ENCODE measurements at regions of chr4 and their contacts with region 1.

Region 1: GRCh38 chr4:145936142-145936996 is 2.3 kb downstream of the ZNF827 start:
- DNase-seq: no peak
- ATAC-seq: peak; percentile 70
- H3K4me3 ChIP-seq: peak overlapping the region; percentile 93
- H3K27ac ChIP-seq: peak overlapping the region; percentile 88
- H3K4me1 ChIP-seq: no peaks in the 10 kb centered on the region
- H3K27me3 ChIP-seq: no peaks in the 10 kb centered on the region
- CTCF ChIP-seq: peak; percentile 2 to 34 (median 19); a peak in 1 of 6 replicates
- EP300 ChIP-seq: no peak
- POLR2A ChIP-seq: peak; percentile 68; the same call in 1 of the 2 replicates
- RAD21 ChIP-seq: 0 out of 2 replicates have a peak, but pooled peaks have one; percentile 17

Region 2: GRCh38 chr4:145180298-145181090 is 755.9 kb before region 1 on chr4 and contains the start of gene OTUD4:
- CTCF ChIA-PET with region 1: no interaction called
- POLR2A ChIA-PET with region 1: no interaction called
- RAD21 ChIA-PET with region 1: no interaction called
- SMC1A ChIA-PET with region 1: no interaction called
- in situ Hi-C with region 1: no loop called
- intact Hi-C with region 1: loop called (anchors 5 kb)
- DNase-seq: peak; percentile 79
- ATAC-seq: peak; percentile 81
- H3K4me3 ChIP-seq: peak within 1 kb of the TSS; percentile 91
- H3K27ac ChIP-seq: peak within 1 kb of the TSS; percentile 95
- H3K4me1 ChIP-seq: peaks cover 25% of the 10 kb centered on the region
- H3K27me3 ChIP-seq: no peaks in the 10 kb centered on the region
- CTCF ChIP-seq: peak; percentile 20 to 44 (median 23); a peak in 4 of 6 replicates
- EP300 ChIP-seq: peak; percentile 33 to 50; a peak in 1 of 4 replicates
- POLR2A ChIP-seq: peak; percentile 80
- RAD21 ChIP-seq: peak; percentile 51; the same call in 1 of the 2 replicates
- polyA plus RNA-seq, gene OTUD4: 2.8 to 4.4 TPM

Region 3: GRCh38 chr4:145808021-145808650 is 128.2 kb before region 1 on chr4:
- CTCF ChIA-PET with region 1: interaction called, 8 read pairs
- POLR2A ChIA-PET with region 1: interaction called, 4 read pairs
- RAD21 ChIA-PET with region 1: no interaction called
- SMC1A ChIA-PET with region 1: interaction called, 4 read pairs
- in situ Hi-C with region 1: no loop called
- intact Hi-C with region 1: loop called (anchors 1 kb)
- DNase-seq: peak; percentile 86
- ATAC-seq: peak; percentile 87
- H3K4me3 ChIP-seq: peak overlapping the region; percentile 18; the same call in 1 of the 2 replicates
- H3K27ac ChIP-seq: peak overlapping the region; percentile 90
- H3K4me1 ChIP-seq: peaks cover 36% of the 10 kb centered on the region
- H3K27me3 ChIP-seq: no peaks in the 10 kb centered on the region
- CTCF ChIP-seq: no peak
- EP300 ChIP-seq: peak; percentile 87 to 91
- POLR2A ChIP-seq: no peak
- RAD21 ChIP-seq: peak; percentile 34; the same call in 1 of the 2 replicates

Region 4: DNA sequence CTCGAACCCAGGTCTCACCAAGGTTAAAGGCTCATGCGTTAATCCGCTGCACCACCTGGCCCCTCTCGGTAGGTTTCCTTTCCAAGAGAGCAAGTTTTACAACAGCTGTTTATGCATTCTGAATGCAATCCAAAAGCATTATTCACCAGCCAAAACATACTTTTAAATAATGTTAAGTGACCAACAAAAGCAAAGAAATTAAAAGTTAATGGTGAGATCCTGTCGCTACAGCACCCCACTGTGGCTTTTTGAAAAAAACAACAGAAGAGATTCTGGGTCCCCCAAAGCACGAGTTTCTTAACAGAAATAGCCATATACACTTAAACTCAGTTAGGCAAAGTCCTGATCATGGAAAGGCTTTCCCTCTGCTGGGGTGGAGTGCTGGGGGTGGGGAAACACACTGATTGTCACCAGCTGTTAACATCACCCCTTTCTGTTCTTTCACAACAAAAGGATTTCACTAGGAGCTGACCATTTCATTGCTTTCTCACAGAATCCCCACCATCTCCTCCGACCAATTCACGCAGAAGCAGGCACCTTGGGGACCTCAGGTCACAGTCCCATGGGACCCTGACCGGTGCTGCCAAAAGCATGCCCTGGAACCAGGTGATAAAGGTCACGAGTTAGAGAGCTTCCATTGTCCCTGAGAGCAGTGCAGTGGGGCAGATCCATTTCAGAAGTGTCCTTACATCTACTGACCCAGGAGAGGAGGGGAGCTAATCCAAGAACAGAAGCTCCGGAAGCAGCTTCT is 49.0 kb before region 1 on chr4:
- CTCF ChIA-PET with region 1: interaction called, 3 read pairs
- POLR2A ChIA-PET with region 1: interaction called, 10 read pairs
- RAD21 ChIA-PET with region 1: interaction called, 10 read pairs
- SMC1A ChIA-PET with region 1: interaction called, 12 read pairs
- in situ Hi-C with region 1: no loop called
- intact Hi-C with region 1: loop called (anchors 5 kb)
- DNase-seq: no peak
- ATAC-seq: peak; percentile 74
- H3K4me3 ChIP-seq: no peak overlapping the region
- H3K27ac ChIP-seq: peak overlapping the region; percentile 17
- H3K4me1 ChIP-seq: peaks cover 39% of the 10 kb centered on the region
- H3K27me3 ChIP-seq: no peaks in the 10 kb centered on the region
- CTCF ChIP-seq: no peak; a peak in 1 of 6 replicates
- EP300 ChIP-seq: no peak
- POLR2A ChIP-seq: no peak
- RAD21 ChIP-seq: 0 out of 2 replicates have a peak, but pooled peaks have one; percentile 14

Region 5: DNA sequence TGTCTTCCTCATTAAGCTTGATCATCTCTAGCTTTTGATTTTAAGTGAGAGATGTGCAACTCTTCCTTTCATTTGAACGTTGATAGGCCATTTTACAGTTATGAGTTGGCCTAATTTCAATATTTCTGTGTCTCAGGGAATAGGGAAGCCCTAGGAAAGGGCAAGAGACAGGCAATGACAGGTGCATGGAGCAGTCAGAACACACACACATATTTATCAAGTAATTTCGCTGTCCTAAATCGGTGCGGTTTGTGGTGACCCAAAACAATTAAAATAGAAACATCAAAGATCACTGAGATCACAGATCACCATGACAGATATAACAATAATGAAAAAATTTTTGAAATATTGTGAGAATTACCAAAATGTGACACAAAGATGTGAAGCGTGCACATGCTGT is 151.5 kb after region 1 on chr4:
- CTCF ChIA-PET with region 1: no interaction called
- POLR2A ChIA-PET with region 1: no interaction called
- RAD21 ChIA-PET with region 1: no interaction called
- SMC1A ChIA-PET with region 1: no interaction called
- in situ Hi-C with region 1: no loop called
- intact Hi-C with region 1: no loop called
- DNase-seq: no peak
- ATAC-seq: no peak
- H3K4me3 ChIP-seq: no peak overlapping the region
- H3K27ac ChIP-seq: no peak overlapping the region
- H3K4me1 ChIP-seq: no peaks in the 10 kb centered on the region
- H3K27me3 ChIP-seq: no peaks in the 10 kb centered on the region
- CTCF ChIP-seq: no peak
- EP300 ChIP-seq: no peak
- POLR2A ChIP-seq: no peak
- RAD21 ChIP-seq: no peak

Region 6: DNA sequence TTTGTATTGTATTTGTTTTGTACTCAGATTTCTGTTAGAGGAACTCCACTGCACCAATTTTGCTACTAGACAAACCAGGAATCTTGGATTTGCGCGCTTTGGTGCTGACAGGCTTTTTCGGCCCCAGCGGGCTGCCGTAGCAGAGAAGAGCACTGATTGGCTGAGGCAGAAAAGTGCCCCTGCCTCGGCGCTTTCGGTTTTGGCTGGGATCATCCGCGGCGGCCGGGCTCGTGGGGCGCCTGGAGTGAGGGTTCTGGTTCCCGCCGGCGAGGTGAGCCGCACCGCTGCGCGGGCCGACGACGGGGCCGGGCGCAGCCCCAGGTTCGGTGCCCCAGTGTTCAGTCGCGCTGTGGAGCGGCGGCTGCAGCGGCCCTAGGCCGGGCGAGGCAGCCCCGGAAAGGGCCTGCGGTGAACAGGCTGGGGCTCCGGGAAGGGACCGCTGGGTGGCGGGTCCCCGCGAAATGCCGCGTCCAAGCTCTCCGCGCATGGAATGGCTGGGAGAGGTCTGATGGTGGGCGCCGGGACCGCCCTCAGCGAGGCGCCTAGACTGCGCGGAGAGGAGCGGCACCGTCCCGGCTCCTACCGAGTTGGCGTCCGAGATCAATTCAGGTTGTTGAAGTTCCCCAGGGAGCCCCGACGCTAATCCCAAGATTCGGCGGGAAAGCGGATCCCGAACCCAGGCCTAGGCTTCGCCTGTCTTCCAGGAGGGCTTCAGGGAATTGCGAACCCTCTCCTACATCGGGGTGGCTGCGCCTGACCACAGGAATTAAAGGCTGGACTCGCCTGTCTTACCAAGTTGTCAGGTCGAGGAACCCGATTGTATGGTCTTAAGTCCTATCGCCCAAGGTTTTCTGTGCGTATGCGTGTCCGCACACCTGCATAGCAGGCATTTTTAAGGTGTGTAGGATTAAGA is 239.4 kb after region 1 on chr4 and contains the start of gene LSM6:
- CTCF ChIA-PET with region 1: no interaction called
- POLR2A ChIA-PET with region 1: interaction called, 3 read pairs
- RAD21 ChIA-PET with region 1: no interaction called
- SMC1A ChIA-PET with region 1: no interaction called
- in situ Hi-C with region 1: no loop called
- intact Hi-C with region 1: loop called (anchors 2 kb)
- DNase-seq: peak; percentile 36
- ATAC-seq: peak; percentile 89
- H3K4me3 ChIP-seq: peak within 1 kb of the TSS; percentile 84
- H3K27ac ChIP-seq: peak within 1 kb of the TSS; percentile 92
- H3K4me1 ChIP-seq: peaks cover 13% of the 10 kb centered on the region
- H3K27me3 ChIP-seq: no peaks in the 10 kb centered on the region
- CTCF ChIP-seq: no peak
- EP300 ChIP-seq: no peak
- POLR2A ChIP-seq: peak; percentile 87
- RAD21 ChIP-seq: no peak
- polyA plus RNA-seq, gene LSM6: 261 to 262 TPM

Measured in GM12878 (cell line).